SK-N-SH (cell line): ENCODE measurements at regions of chr7 and their contacts with region 1.

Region 1: DNA sequence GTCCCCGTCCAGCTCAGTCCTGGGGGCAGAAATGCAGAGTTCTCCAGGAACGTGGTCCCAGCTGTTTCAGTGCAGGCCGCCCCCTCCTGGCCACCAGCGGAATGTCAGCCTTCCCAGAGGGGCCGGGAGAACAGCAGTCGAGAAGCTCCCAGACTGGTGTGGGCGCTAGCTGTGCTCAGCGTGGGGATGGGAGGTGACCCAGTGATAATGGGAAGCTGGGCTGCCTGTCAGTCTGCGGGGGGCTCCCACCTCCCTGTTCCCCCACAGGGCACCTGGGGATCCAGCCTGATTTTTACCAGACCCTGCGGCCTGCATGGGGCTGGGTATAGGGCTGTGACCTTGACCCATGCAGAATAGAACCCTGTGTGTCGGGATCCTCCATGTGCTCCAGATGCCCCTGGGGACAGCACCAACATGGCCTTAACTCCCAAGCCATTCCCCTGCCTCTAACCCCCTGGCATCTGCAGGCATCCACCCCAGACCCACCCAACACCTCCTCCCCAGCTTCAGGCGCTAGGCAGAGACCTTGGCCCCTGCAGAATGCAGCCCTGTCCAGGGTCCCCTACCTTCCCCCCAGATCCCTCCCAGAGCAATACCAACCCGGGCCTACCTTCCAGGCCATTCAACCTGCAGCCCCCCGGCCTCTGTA is 946 bp upstream of the ELN start:
- DNase-seq: peak; percentile 92
- H3K4me3 ChIP-seq: no peak overlapping the region; a peak in 1 of 4 replicates
- H3K27ac ChIP-seq: peak overlapping the region; percentile 11 to 78; a peak in 2 of 4 replicates
- H3K4me1 ChIP-seq: peaks cover 22 to 85% of the 10 kb centered on the region in 2 experiments
- H3K27me3 ChIP-seq: no peaks in the 10 kb centered on the region
- CTCF ChIP-seq: peak; percentile 99
- EP300 ChIP-seq: peak in 1 of 2 experiments; percentile 64; a peak in 2 of 4 replicates
- RAD21 ChIP-seq: peak; percentile 92

Region 2: GRCh38 chr7:73858807-73859206 is 168.2 kb before region 1 on chr7:
- CTCF ChIA-PET with region 1: interaction called, 39 read pairs
- POLR2A ChIA-PET with region 1: no interaction called
- DNase-seq: no peak
- H3K4me3 ChIP-seq: no peak overlapping the region
- H3K27ac ChIP-seq: no peak overlapping the region
- H3K4me1 ChIP-seq: no peaks in the 10 kb centered on the region; a peak in 1 of 4 replicates
- H3K27me3 ChIP-seq: no peaks in the 10 kb centered on the region
- CTCF ChIP-seq: no peak
- EP300 ChIP-seq: no peak
- RAD21 ChIP-seq: no peak

Region 3: GRCh38 chr7:73879977-73880681 is 146.9 kb before region 1 on chr7:
- CTCF ChIA-PET with region 1: interaction called, 29 read pairs
- POLR2A ChIA-PET with region 1: no interaction called
- DNase-seq: peak; percentile 27
- H3K4me3 ChIP-seq: no peak overlapping the region
- H3K27ac ChIP-seq: no peak overlapping the region
- H3K4me1 ChIP-seq: peaks cover 9 to 14% of the 10 kb centered on the region in 2 experiments; a peak in 3 of 4 replicates
- H3K27me3 ChIP-seq: no peaks in the 10 kb centered on the region
- CTCF ChIP-seq: no peak
- EP300 ChIP-seq: no peak
- RAD21 ChIP-seq: no peak

Region 4: DNA sequence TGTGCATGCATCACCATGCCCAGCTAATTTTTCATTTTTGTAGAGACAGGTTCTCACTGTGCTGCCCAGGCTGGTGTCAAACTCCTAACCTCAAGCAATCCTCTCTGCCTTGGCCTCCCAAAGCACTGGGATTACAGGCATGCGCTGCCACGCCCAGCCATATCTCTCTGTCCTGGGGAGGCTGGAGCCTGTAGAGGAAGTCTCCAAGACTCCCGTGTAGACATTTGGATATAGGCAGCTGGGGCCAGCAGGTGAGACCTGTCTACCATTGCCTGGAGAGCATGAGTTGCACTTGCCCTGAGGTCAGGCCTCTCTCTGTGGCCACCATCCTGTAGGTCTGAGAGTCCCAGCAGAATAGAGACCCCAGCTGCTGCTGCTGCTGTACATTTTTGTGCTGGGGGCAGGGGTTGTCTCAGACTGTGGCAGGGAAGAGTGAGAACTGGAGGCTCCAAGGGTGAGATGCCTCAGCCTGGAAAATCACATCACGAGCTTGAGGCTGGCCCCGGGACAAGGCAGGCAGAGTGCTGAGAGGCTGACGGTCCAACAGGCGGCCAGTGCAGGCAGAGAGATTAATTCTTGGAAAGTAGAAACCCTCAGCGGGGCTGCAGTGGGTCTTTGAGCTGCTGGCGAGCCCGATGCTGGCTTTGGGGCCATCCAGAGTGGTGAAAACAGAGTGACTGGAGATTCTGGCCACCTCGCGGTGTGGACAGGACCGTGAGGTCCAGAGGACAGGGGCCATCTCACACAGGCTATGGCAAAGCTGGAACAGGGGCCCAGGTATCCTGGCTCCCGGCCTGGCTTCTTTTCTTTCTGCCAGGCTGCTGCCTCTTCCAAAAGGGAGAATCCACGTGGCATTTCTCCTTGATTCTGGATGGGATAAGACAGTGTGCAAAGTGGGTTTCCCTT is 105.2 kb before region 1 on chr7:
- CTCF ChIA-PET with region 1: interaction called, 44 read pairs
- POLR2A ChIA-PET with region 1: interaction called, 4 read pairs
- DNase-seq: peak; percentile 16
- H3K4me3 ChIP-seq: no peak overlapping the region
- H3K27ac ChIP-seq: no peak overlapping the region
- H3K4me1 ChIP-seq: peaks cover 0 to 36% of the 10 kb centered on the region in 2 experiments; a peak in 1 of 4 replicates
- H3K27me3 ChIP-seq: no peaks in the 10 kb centered on the region
- CTCF ChIP-seq: no peak
- EP300 ChIP-seq: no peak
- RAD21 ChIP-seq: no peak

Region 5: DNA sequence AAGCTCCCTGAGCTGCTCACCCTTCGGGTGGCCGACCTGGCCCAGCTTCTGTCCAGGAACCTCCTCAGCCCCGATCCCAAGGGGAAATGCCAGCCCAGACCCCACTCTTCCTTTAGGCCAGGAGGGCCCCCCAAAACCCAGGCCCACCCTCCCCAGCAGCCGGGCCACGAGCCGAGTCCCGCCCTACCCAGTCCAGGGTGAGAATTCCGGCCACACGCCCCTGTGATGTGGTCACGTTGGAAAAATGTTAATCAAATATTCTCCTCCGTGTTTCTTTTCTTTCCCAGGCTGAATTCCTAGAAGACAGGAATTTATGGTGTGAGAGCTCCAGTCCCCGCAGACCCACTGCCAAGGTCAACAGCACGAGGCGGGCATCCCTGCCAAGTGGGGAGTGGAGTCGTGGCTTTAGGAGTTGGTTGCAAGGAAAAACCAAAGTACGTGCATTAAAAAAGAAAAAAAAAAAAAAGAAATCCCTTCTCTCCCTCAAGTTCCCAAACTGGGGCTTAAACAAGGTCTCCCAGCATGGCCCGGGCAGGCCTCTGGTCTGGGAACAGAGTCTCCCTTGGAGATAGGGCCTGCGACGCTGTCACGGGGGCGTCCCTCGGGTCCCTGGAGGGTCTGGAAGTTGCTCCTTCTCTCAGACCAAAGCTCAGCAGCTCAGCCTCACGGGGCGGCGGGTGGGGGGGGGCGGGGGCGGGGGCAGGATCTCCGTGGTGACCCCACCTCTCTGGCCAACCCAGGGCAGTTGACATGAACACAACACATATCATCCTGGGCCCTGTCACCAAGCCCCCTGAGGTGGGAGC is 27.2 kb before region 1 on chr7:
- CTCF ChIA-PET with region 1: interaction called, 21 read pairs
- POLR2A ChIA-PET with region 1: no interaction called
- DNase-seq: no peak
- H3K4me3 ChIP-seq: no peak overlapping the region
- H3K27ac ChIP-seq: peak overlapping the region in 1 of 2 experiments; percentile 90; a peak in 2 of 4 replicates
- H3K4me1 ChIP-seq: peaks cover 0 to 4% of the 10 kb centered on the region in 2 experiments; a peak in 2 of 4 replicates
- H3K27me3 ChIP-seq: no peaks in the 10 kb centered on the region
- CTCF ChIP-seq: no peak
- EP300 ChIP-seq: peak in 1 of 2 experiments; percentile 71; a peak in 1 of 4 replicates
- RAD21 ChIP-seq: no peak

Region 6: DNA sequence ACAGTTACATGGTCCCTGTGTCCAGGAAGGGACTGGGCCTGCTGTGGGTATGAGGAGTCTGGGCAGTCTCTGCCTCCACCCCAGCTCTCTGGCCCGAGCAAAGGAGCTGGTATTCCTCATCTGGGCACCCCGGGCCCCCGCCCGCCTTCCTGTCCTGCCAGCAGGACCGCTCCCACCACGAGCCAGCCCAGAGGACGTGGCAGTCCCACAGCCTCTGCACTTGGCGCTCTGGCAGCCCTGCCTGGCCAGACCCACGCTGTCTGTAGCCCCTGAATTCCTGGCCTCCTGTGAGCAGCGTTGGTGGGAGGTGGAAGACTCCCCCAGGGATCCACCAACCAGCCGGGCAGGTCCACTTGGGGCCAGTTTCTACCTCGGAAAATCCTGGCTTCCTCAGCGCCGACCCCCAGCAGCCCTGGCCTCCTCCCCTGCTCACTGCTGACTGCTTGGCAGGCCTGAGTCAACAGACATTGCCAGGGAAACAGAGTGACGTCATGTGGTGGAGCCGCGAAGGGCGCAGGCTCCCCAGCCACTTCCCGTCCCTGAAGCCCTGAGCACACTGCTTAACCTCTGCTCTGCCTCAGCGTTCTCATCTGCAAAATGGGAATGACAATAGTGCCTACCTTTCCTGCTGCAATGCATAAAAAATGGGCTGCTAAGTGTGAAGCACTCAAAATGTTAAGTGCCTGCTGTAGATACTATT is 35.0 kb after region 1 on chr7:
- CTCF ChIA-PET with region 1: interaction called, 23 read pairs
- POLR2A ChIA-PET with region 1: no interaction called
- DNase-seq: peak; percentile 79
- H3K4me3 ChIP-seq: 0 out of 4 replicates have a peak overlapping the region, but pooled peaks of 1 of the 2 experiments have one; percentile 5
- H3K27ac ChIP-seq: peak overlapping the region in 1 of 2 experiments; percentile 87; a peak in 2 of 4 replicates
- H3K4me1 ChIP-seq: no peaks in the 10 kb centered on the region
- H3K27me3 ChIP-seq: no peaks in the 10 kb centered on the region
- CTCF ChIP-seq: no peak
- EP300 ChIP-seq: no peak
- RAD21 ChIP-seq: no peak